ENCODE measurements at regions of chr19 and their contacts with region 1.

Region 1: DNA sequence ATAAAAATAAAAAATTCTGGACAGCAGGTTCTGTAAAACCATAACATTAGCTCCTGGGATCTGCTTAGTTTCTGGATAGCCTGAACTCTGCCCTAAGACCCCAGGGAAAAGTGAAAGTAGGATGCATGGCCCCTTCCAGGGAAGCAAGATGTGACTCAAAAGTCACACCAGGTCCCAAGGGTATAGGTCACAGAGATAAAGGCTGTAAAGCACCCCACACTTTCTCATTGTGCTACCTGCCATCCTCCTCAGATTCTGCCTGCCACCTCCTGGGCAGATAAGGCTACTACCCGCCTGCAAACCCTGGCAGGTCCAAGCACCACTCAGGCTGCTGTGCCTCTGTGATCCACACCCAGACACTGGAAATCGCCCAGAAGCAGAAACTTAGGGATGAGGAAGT is 20.6 kb downstream of the FFAR2 start:
- DNase-seq: no peak
- H3K4me3 ChIP-seq: no peak overlapping the region
- H3K27ac ChIP-seq: no peak overlapping the region
- H3K4me1 ChIP-seq: no peaks in the 10 kb centered on the region
- H3K27me3 ChIP-seq: no peaks in the 10 kb centered on the region
- CTCF ChIP-seq: peak in 1 of 2 donors; percentile 52
- POLR2A ChIP-seq: no peak

Region 2: GRCh38 chr19:35352448-35353304 is 116.0 kb before region 1 on chr19:
- CTCF ChIA-PET with region 1: interaction called, 31 read pairs
- POLR2A ChIA-PET with region 1: no interaction called
- dilution Hi-C with region 1: no loop called
- intact Hi-C with region 1: loop called (anchors 1 kb)
- DNase-seq: peak; percentile 66
- H3K4me3 ChIP-seq: no peak overlapping the region
- H3K27ac ChIP-seq: no peak overlapping the region
- H3K4me1 ChIP-seq: no peaks in the 10 kb centered on the region
- H3K27me3 ChIP-seq: no peaks in the 10 kb centered on the region
- CTCF ChIP-seq: peak; percentile 70 to 76
- POLR2A ChIP-seq: no peak

Measured in endothelial cell of umbilical vein (primary cell).